ENCODE measurements at regions of chr1 and their contacts with region 1.

Region 1: DNA sequence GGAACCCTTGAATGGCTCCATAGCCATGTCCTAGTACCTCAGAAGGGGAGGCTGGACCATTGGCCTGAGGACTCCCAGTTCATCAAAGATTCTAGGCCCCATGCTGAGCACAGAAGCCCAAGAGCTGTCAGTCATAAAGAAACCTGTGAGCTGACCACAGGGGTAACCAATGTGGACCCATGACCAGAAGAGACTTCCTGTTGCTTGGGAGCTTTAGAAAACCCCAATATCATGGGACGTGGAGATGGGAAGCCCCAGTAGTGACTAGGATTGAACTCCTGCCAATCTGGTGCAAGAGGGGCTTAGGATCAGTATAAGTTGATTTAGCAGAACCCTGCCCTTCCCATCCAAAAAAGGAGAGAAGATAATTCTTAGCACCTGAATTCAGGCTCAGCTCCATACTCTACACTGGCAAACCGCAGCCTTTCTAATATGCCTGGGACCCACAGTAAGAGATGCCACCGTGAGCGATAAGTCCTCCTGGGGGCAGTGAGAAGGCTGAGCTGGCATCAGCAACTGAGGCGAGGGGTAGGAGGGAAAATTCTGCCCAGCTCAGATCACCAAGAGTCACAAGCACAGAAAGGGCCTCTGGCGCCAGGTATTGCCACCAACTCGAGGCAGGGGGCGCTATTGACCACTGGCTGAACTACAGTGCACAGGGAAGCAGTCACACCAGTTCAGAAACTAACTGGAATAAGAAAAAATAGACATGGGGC is 108.9 kb downstream of the CAPN8 start:
- DNase-seq: peak; percentile 59
- ATAC-seq: peak; percentile 47
- H3K4me3 Mint-ChIP-seq: no peak overlapping the region
- H3K27ac Mint-ChIP-seq: no peak overlapping the region
- H3K4me1 Mint-ChIP-seq: peaks cover 8% of the 10 kb centered on the region
- H3K27me3 Mint-ChIP-seq: peaks cover 5% of the 10 kb centered on the region

Region 2: GRCh38 chr1:223363856-223364684 is 192.5 kb before region 1 on chr1 and contains the start of gene SUSD4:
- CTCF ChIA-PET with region 1: no interaction called
- DNase-seq: peak; percentile 53
- ATAC-seq: peak; percentile 76
- H3K4me3 Mint-ChIP-seq: peak within 1 kb of the TSS; percentile 62
- H3K27ac Mint-ChIP-seq: no peak within 1 kb of the TSS
- H3K4me1 Mint-ChIP-seq: peaks cover 7% of the 10 kb centered on the region
- H3K27me3 Mint-ChIP-seq: peaks cover 64% of the 10 kb centered on the region
- total RNA-seq, gene SUSD4: 0.21 TPM in 1 of 2 experiments, not detected in the other

Region 3: DNA sequence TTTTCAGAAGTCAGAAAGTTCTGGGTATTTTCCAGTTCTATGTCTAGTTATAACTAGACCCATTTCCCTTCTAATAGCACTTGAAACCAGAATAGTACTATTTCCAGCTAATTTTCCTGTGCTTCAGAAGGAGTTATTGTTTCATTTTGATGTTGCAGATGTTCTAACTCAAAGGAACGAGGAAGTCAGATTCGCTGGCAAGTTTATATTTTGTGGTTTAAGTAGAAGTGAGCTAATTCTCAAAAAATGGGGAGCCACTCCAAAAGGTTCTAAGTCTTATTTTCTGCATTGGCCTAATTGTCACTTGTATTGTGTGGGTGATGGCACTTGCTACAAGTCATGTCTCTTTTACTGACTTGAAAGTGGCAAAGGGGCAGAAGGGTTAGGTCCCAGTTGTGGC is 145.3 kb before region 1 on chr1:
- CTCF ChIA-PET with region 1: no interaction called
- DNase-seq: no peak
- ATAC-seq: no peak
- H3K4me3 Mint-ChIP-seq: no peak overlapping the region
- H3K27ac Mint-ChIP-seq: no peak overlapping the region
- H3K4me1 Mint-ChIP-seq: no peaks in the 10 kb centered on the region
- H3K27me3 Mint-ChIP-seq: peaks cover 25% of the 10 kb centered on the region

Region 4: GRCh38 chr1:223609977-223610376 is 53.4 kb after region 1 on chr1:
- CTCF ChIA-PET with region 1: interaction called, 17 read pairs
- DNase-seq: no peak
- ATAC-seq: no peak
- H3K4me3 Mint-ChIP-seq: no peak overlapping the region
- H3K27ac Mint-ChIP-seq: no peak overlapping the region
- H3K4me1 Mint-ChIP-seq: no peaks in the 10 kb centered on the region
- H3K27me3 Mint-ChIP-seq: peaks cover 3% of the 10 kb centered on the region

Region 5: GRCh38 chr1:223872309-223872901 is 315.8 kb after region 1 on chr1:
- CTCF ChIA-PET with region 1: no interaction called
- DNase-seq: no peak
- ATAC-seq: no peak
- H3K4me3 Mint-ChIP-seq: no peak overlapping the region
- H3K27ac Mint-ChIP-seq: no peak overlapping the region
- H3K4me1 Mint-ChIP-seq: no peaks in the 10 kb centered on the region
- H3K27me3 Mint-ChIP-seq: peaks cover 28% of the 10 kb centered on the region